Head of caudate nucleus (tissue), 42 donors: ENCODE measurements at regions of chr21 and their contacts with region 1.

Region 1: GRCh38 chr21:42009831-42010523 is at the start of gene ZBTB21:
- DNase-seq: peak; percentile 90 to 99 (median 97)

Region 2: DNA sequence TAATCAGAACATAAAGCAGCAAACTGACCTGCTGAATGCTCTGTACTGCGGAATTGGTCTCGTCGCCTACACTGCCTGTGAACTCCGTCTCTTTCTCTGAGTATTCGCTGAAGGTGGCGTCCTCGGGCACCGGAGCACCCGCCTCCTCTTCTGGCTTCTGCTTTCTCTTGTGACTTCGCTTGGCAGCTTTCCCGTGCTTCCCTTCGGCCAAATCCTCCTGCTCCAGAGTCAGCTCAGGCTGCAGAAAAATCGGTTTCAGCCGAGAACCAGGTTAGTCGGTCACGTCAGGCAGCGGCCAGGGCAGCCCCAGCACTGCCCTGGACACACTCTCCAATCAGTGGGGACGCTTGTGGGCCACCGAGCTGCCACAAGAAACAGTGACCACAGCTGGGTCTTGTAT is 207.3 kb before region 1 on chr21:
- intact Hi-C with region 1: no loop called
- DNase-seq: peak; percentile 28 to 86 (median 72)

Region 3: GRCh38 chr21:41953831-41954653 is 55.9 kb before region 1 on chr21 and contains the start of gene C2CD2:
- intact Hi-C with region 1: loop called (anchors 10 kb)
- DNase-seq: peak in 30 of 42 donors; percentile 16 to 58 (median 40)

Region 4: GRCh38 chr21:42117229-42117966 is 107.4 kb after region 1 on chr21:
- intact Hi-C with region 1: loop called (anchors 5 kb)
- DNase-seq: peak; percentile 64 to 95 (median 87)

Region 5: DNA sequence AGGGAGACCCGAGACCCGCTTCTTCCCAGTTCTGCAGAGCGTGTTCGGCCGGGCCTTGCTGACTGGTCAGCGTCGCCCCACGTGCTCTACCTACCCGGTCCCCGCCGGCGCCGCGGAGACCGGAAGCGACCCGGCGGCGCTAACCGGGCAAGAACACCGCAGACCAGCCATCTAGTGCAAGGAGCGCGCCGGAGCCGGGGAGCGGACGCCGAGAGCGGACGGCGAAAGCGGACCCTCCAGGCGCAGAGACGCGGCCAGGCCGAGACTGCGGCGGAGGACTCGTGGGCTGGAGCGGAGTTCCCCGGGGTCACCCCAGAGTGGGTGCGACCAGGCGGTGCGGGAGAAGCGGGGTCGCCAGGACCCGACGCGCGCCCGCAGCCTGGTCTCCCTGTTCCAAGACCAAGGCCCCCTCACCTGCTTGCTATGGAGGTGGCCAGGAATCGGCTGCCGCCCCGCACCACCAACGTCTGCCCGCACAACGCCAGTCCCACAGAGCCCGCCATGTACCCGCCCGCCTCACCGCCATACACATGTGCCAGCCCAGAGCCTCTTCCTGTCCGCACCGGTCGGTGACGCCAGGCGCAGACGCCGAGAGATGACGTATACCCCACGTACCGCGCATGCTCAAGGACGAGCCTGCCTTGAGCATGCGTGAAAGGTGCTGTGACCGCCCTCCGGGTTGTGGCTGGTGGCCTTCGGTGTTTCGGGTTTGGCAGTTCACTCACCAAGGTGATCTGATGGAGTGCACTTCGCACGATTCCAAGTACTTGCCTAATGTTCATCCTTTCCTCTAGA is 869.2 kb after region 1 on chr21 and contains the start of gene WDR4:
- intact Hi-C with region 1: loop called (anchors 10 kb)
- DNase-seq: peak; percentile 87 to 98 (median 93)